Esophagus squamous epithelium (tissue), 5 donors: ENCODE measurements at regions of chr18 and their contacts with region 1.

Region 1: DNA sequence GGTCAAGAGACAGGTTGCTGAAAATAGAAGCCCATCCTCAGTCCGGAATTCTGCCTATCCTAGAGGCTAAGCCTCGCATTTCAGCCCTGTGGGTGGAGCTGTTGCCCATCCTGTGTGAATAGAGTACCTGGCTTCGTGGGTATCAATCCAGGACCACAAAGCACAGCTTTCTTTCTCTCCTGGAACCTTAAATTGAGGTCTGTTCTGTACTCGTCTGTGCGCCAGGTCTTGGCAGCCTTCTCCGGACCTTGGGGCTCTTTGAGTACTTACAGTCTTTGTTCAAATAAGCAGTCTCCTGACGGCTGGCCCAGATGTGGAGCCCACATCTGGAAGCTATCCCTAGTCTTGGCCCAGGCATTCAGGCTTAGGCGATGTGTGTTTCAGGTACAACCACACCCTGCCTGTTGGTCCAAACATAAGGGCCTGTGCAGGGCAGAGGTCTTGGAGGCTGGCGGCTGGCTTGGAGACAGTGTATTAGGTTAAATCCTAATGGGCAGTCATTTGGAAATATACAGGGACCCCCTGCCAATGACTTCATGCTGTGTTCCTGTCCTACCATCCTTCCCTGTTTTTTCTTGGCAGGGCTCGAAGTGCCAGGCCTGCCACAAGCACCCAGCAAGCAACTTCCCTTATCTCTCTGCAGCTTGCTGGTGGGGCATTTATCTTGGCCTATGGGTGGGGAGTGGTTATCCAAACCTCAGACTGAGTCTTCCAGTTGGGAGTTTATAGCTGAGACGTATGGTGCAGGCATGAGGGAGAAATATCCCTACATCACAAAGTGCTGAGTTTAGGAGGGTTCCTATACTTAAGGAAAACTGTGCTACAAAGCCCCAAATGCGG is 294.1 kb downstream of the BCL2 start:
- DNase-seq: no peak
- H3K4me3 ChIP-seq: no peak overlapping the region
- H3K27ac ChIP-seq: no peak overlapping the region
- H3K4me1 ChIP-seq: no peaks in the 10 kb centered on the region
- H3K27me3 ChIP-seq: no peaks in the 10 kb centered on the region
- CTCF ChIP-seq: peak in 4 of 6 experiments; percentile 15 to 46 (median 28)
- POLR2A ChIP-seq: no peak

Region 2: GRCh38 chr18:63119647-63120046 is 94.2 kb after region 1 on chr18:
- intact Hi-C with region 1: loop called (anchors 5 kb)
- DNase-seq: no peak
- H3K4me3 ChIP-seq: no peak overlapping the region
- H3K27ac ChIP-seq: no peak overlapping the region
- H3K4me1 ChIP-seq: no peaks in the 10 kb centered on the region
- H3K27me3 ChIP-seq: no peaks in the 10 kb centered on the region
- CTCF ChIP-seq: peak in 5 of 6 experiments; percentile 18 to 39 (median 20)
- POLR2A ChIP-seq: no peak

Region 3: DNA sequence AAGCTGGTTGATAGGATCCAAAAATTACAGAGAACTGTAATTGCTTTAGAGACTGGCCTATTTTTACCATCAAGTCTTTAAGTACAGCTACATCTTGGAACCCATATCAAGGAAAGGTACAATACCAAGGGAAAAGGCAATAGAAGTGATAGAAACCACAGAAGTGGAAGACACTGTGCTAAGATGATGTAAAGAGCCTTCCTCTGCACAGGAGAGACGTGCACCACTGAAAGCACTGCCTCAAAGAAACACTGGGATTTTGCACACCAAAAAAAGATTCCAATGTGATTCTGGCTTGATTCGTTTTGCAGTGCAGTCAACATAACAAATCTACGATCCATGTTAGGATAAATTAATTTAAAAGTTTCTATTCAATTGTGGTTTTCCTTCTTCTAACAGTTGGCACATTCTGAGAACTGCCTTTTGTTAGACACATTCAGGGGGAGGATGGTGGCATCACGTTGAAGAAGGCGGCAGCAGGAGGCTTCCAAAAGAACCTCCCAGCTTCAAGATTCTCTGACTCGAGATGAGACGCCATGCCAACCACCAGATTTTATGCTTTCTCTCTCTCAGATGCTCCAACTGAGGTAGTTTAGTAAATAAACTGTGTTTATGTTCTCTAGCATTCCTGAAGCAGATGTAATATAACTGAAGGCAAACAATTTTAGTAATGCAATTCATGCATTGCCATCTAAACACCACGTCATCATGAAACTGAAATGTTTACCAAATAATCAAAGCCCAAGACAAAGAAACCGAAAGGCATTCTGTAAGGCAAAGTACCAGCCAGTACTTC is 191.2 kb after region 1 on chr18:
- intact Hi-C with region 1: no loop called
- DNase-seq: no peak
- H3K4me3 ChIP-seq: peak overlapping the region in 1 of 4 donors; percentile 33
- H3K27ac ChIP-seq: peak overlapping the region in 2 of 4 donors; percentile 44 to 47
- H3K4me1 ChIP-seq: peaks cover 0 to 8% (median 0%) of the 10 kb centered on the region in 3 donors
- H3K27me3 ChIP-seq: no peaks in the 10 kb centered on the region
- CTCF ChIP-seq: no peak
- POLR2A ChIP-seq: no peak

Region 4: GRCh38 chr18:63439334-63439733 is 413.9 kb after region 1 on chr18:
- intact Hi-C with region 1: loop called (anchors 10 kb)
- DNase-seq: no peak
- H3K4me3 ChIP-seq: no peak overlapping the region
- H3K27ac ChIP-seq: no peak overlapping the region
- H3K4me1 ChIP-seq: peaks cover 0 to 33% (median 5%) of the 10 kb centered on the region in 3 donors
- H3K27me3 ChIP-seq: no peaks in the 10 kb centered on the region
- CTCF ChIP-seq: peak; percentile 52 to 88 (median 76)
- POLR2A ChIP-seq: no peak